ENCODE measurements at regions of chr20 and their contacts with region 1.

Region 1: GRCh38 chr20:59403261-59403961 is 103.0 kb downstream of the EDN3 start:
- DNase-seq: no peak
- H3K4me3 ChIP-seq: no peak overlapping the region
- H3K27ac ChIP-seq: no peak overlapping the region
- H3K4me1 ChIP-seq: peaks cover 6% of the 10 kb centered on the region
- H3K27me3 ChIP-seq: peaks cover 2% of the 10 kb centered on the region
- CTCF ChIP-seq: peak; percentile 80 to 88

Region 2: GRCh38 chr20:59055295-59055694 is 348.1 kb before region 1 on chr20:
- CTCF ChIA-PET with region 1: no interaction called
- dilution Hi-C with region 1: no loop called
- in situ Hi-C with region 1: no loop called
- intact Hi-C with region 1: loop called (anchors 5 kb)
- DNase-seq: no peak
- H3K4me3 ChIP-seq: no peak overlapping the region
- H3K27ac ChIP-seq: no peak overlapping the region
- H3K4me1 ChIP-seq: no peaks in the 10 kb centered on the region
- H3K27me3 ChIP-seq: no peaks in the 10 kb centered on the region
- CTCF ChIP-seq: peak; percentile 43 to 58

Region 3: GRCh38 chr20:59207742-59208357 is 195.6 kb before region 1 on chr20:
- CTCF ChIA-PET with region 1: no interaction called
- dilution Hi-C with region 1: no loop called
- in situ Hi-C with region 1: no loop called
- intact Hi-C with region 1: no loop called
- DNase-seq: peak; percentile 23
- H3K4me3 ChIP-seq: no peak overlapping the region
- H3K27ac ChIP-seq: no peak overlapping the region
- H3K4me1 ChIP-seq: no peaks in the 10 kb centered on the region
- H3K27me3 ChIP-seq: no peaks in the 10 kb centered on the region
- CTCF ChIP-seq: peak; percentile 43 to 76

Region 4: DNA sequence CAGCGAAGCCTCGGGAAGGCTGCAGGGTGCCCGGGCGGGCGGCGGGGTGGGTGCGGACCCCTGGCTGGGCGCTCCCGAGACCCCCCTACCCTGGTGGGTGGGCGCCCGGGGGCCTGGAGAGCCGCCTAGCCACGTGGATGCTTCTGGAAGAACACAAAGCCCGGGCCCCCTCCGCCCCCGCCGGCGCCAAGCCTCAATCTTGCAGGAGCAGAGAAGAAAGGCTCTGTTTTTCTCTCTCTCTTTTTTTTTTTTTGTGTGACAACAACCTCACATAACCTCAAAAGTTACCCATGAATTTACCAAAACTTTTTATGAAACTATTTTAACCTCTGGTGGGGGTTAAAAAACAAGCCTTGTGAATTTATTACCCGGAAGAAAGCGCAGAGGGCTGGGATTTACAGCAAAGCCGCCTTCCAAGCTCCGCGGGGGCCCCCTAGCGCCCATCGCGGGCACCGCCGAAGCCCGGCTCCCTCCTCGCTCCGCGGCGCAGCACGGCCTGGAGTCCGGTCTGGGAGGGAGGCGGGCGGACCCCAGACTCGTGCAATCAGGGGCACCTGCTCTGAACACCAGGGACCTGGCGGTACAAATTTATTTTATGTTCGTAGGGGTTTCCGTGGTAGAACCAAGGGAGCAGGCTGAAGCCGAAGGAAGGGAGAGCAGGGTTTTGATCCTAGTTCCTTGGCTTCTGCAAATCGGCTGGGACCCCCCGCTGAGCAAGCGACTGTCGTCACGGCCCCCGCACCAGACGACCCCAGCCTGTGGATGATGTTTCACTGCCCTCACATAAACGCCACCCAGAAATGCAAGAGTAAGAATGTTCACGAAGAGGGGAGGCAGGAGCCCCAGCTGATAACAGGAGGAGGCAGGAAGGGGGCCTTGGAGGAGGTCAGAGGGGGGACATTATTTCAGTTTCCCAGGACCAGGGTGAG is 180.9 kb before region 1 on chr20:
- CTCF ChIA-PET with region 1: no interaction called
- dilution Hi-C with region 1: no loop called
- in situ Hi-C with region 1: no loop called
- intact Hi-C with region 1: loop called (anchors 5 kb)
- DNase-seq: peak; percentile 39
- H3K4me3 ChIP-seq: peak overlapping the region; percentile 42 to 74 (median 45)
- H3K27ac ChIP-seq: no peak overlapping the region
- H3K4me1 ChIP-seq: peaks cover 6% of the 10 kb centered on the region
- H3K27me3 ChIP-seq: peaks cover 9% of the 10 kb centered on the region
- CTCF ChIP-seq: peak; percentile 72 to 92

Region 5: DNA sequence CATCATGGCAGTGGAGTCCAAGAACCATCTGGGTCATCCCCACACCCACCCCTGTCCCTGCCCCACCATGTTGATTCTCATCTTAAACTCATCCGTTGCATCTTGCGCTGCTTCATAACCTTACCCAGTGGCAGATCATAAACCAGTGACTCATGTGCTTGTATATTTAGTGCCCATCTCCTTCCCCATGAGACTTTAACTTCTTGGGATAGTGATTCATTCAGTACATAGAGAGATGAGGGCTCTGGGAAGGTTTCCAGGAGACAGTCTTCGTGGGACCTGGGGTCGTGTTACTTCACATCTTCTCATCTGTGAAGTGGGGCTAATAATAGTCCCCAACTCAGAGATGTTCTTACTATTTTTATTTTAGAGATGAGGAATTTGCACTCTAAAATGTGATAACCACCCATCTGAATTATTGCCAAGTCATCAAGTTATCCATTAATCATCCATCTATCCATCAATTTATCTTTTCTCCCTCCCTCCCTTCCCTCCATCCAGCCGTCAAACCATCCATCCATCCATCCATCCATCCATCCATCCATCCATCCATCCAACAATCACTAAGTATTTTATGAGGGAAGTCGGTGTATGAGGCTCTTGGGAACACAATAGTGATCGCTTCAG is 51.9 kb before region 1 on chr20:
- CTCF ChIA-PET with region 1: no interaction called
- dilution Hi-C with region 1: no loop called
- in situ Hi-C with region 1: no loop called
- intact Hi-C with region 1: no loop called
- DNase-seq: no peak
- H3K4me3 ChIP-seq: no peak overlapping the region
- H3K27ac ChIP-seq: no peak overlapping the region
- H3K4me1 ChIP-seq: no peaks in the 10 kb centered on the region
- H3K27me3 ChIP-seq: no peaks in the 10 kb centered on the region
- CTCF ChIP-seq: no peak

Region 6: DNA sequence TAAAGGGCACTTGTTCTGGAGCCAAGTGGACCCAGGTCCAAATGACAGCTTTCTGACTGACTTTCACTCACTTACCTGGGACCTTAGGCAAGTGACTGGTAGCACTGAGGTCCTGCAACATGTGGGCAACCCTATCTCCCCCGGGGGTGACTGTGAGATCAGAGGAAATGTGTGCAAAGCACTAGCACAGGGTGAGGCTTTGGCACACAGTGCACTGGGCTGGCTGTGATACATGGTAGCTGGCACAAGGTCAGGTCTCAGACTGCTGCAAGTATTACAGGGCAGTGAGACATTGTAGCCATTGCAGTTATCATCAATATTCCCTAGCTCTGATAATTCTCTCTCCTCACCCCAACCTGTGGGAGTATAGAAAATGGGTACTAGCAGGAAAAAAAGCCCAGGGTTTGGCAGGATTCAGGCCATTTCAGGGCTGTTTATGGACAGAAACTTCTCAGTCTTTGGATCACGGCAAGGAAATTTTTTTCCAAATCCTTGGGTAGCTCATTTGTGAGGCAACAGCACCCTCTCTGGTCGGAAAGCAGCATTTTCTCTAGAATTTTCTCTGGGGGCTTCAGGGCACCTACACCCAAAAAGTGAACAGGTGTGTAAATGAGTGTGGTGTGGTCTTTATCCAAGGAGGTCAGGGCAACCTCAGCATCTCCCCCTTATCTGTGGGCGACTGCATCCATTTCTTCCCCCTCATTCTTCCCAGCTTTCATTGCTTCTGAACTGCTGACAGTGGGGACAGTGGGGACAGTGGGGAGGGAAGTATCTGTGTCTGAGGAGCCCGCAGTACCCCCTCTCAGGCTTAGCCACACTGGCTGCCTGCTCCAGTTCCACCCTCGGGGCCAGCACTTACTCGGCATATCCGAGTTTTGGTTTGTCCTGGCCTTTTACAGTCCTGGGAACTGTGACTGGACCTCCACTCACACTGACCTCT is 52.3 kb after region 1 on chr20:
- CTCF ChIA-PET with region 1: interaction called, 3 read pairs
- dilution Hi-C with region 1: loop called (anchors 5 kb)
- in situ Hi-C with region 1: no loop called
- intact Hi-C with region 1: no loop called
- DNase-seq: peak; percentile 5
- H3K4me3 ChIP-seq: no peak overlapping the region
- H3K27ac ChIP-seq: no peak overlapping the region
- H3K4me1 ChIP-seq: no peaks in the 10 kb centered on the region
- H3K27me3 ChIP-seq: no peaks in the 10 kb centered on the region
- CTCF ChIP-seq: peak; percentile 48 to 63

Measured in mammary epithelial cell (primary cell).